ENCODE measurements at regions of chr18 and their contacts with region 1.

Region 1: GRCh38 chr18:80034068-80034851 is at the start of gene RBFA:
- DNase-seq: peak; percentile 100
- total RNA-seq, gene RBFA: 24.4 TPM

Region 2: GRCh38 chr18:79679111-79679872 is 355.0 kb before region 1 on chr18 and contains the start of gene CTDP1:
- intact Hi-C with region 1: loop called (anchors 5 kb)
- DNase-seq: peak; percentile 100
- total RNA-seq, gene CTDP1: 10.8 TPM

Region 3: GRCh38 chr18:79951578-79952455 is 82.4 kb before region 1 on chr18 and contains the start of gene SLC66A2:
- intact Hi-C with region 1: loop called (anchors 5 kb)
- DNase-seq: peak; percentile 98
- total RNA-seq, gene SLC66A2: 23.5 TPM

Region 4: GRCh38 chr18:79988451-79989194 is 45.6 kb before region 1 on chr18 and contains the start of gene TXNL4A:
- intact Hi-C with region 1: loop called (anchors 2 kb)
- DNase-seq: peak; percentile 94
- total RNA-seq, gene TXNL4A: 96.5 TPM

Region 5: GRCh38 chr18:80046961-80047541 is 12.8 kb after region 1 on chr18:
- intact Hi-C with region 1: no loop called
- DNase-seq: no peak

Region 6: GRCh38 chr18:80108728-80109675 is 74.7 kb after region 1 on chr18 and contains the start of gene ADNP2:
- intact Hi-C with region 1: loop called (anchors 5 kb)
- DNase-seq: peak; percentile 82
- total RNA-seq, gene ADNP2: 11.8 TPM

Measured in cardiac septum (tissue), 1 donor.